ENCODE measurements at regions of chr7 and their contacts with region 1.

Region 1: DNA sequence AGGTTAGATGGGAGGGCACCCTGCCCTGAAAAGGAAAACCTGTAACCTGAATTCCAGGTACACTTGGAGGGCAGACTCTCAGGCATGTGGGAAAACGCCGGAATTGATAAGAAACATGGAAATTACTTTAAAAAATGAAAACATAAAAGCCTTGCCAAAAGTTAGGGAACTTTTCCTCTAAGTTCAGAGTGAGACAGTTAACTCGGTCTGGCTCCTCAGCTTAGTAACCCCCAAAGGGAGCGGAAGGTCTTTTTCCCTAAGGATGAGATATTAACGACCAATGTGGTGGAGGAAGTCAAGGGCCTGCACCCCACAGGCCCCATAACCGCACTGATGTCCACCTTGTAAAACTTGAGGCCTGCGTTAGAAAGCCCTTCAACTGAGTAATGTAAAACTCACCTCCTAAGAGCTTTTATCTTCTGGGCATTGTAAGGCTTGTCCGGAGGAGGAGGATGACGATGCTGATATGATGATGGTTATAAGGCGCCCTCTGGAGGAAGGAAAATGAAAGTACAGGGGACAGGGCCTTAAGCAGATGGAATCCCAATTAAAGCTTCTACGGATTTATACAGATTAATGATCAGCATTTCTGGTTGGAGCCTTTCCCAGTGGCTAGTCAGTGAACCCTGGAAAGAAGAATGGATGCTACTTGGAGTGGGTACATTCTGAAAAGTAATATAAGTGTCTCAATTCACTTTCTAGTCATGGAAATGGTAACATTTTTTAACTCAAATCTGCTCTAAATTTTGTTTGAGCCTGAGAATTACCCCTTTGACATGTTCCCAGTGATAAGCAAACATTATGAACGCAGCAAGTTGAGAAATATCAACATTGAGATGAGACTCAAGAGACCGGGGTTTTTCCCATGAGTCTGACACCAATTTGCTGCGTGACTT is 694 bp downstream of the COL1A2 start:
- DNase-seq: peak; percentile 47 to 76
- ATAC-seq: peak; percentile 44 to 86; a peak in 5 of 6 replicates
- H3K4me3 ChIP-seq: no peak overlapping the region
- H3K27ac ChIP-seq: peak overlapping the region in 1 of 2 experiments; percentile 19; a peak in 1 of 6 replicates
- H3K4me1 ChIP-seq: peaks cover 19% of the 10 kb centered on the region
- CTCF ChIP-seq: peak; percentile 54
- EP300 ChIP-seq: no peak
- POLR2A ChIP-seq: no peak
- RAD21 ChIP-seq: peak; percentile 73 to 85

Region 2: DNA sequence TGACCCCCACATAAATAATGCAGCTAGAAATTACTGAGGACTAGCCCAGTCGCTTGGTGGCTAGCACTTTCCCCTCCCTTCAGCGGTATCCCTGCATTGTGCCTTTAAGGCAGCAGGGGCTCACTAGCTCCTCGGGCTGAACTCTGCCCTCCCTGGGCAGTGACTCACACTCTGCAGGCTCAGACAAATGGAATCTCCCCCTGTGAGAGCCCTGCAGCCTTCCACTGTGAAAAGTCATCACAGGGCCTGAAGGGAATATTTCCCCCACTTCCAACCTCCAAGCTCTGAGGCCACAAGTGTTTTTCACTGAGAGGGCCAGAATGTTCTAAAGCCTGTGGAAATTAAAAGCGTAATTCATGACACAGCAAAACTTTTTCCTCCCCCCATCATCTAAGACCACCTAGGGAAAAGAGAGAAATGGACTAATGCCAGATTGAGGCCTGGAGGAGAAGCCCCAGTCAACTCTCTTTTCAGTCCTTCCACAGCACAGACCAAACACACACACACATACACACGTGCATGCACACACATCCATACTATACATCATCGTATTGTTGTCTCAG is 94.3 kb before region 1 on chr7:
- CTCF ChIA-PET with region 1: interaction called, 28 read pairs
- POLR2A ChIA-PET with region 1: no interaction called
- DNase-seq: peak; percentile 93 to 95
- ATAC-seq: peak; percentile 99 to 100
- H3K4me3 ChIP-seq: no peak overlapping the region
- H3K27ac ChIP-seq: peak overlapping the region; percentile 91 to 92
- H3K4me1 ChIP-seq: peaks cover 67% of the 10 kb centered on the region
- CTCF ChIP-seq: no peak
- EP300 ChIP-seq: peak; percentile 56 to 61; a peak in 2 of 5 replicates
- POLR2A ChIP-seq: no peak
- RAD21 ChIP-seq: peak; percentile 22 to 41; a peak in 2 of 5 replicates

Region 3: DNA sequence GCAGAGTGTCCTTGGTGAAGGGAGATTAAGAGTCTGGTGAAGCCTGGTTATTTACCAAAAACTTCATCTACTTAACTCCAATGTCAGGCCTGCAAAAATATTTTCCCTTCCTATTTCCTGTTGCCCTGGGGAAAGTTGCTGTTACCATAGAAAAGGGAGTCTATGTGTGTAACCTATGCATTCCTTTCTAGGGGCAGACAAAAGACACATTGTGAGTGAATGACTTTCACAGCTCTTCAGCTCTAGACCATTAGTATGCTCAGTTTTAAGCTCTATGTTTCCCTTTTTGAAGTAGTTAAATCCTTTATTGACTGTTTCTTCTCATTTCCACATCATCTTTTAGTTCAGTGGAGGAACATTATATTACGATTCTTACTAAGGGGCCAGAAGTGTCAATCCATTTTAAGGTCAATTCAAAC is 306.2 kb after region 1 on chr7:
- CTCF ChIA-PET with region 1: no interaction called
- POLR2A ChIA-PET with region 1: no interaction called
- DNase-seq: peak; percentile 7 to 58
- ATAC-seq: peak in 1 of 2 experiments; percentile 80; a peak in 3 of 6 replicates
- H3K4me3 ChIP-seq: no peak overlapping the region
- H3K27ac ChIP-seq: peak overlapping the region; percentile 11 to 29; a peak in 2 of 6 replicates
- H3K4me1 ChIP-seq: peaks cover 36% of the 10 kb centered on the region
- CTCF ChIP-seq: no peak
- EP300 ChIP-seq: no peak
- POLR2A ChIP-seq: no peak
- RAD21 ChIP-seq: no peak

Measured in A549 (cell line).